WTC11 (cell line): ENCODE measurements at regions of chr14 and their contacts with region 1.

Region 1: DNA sequence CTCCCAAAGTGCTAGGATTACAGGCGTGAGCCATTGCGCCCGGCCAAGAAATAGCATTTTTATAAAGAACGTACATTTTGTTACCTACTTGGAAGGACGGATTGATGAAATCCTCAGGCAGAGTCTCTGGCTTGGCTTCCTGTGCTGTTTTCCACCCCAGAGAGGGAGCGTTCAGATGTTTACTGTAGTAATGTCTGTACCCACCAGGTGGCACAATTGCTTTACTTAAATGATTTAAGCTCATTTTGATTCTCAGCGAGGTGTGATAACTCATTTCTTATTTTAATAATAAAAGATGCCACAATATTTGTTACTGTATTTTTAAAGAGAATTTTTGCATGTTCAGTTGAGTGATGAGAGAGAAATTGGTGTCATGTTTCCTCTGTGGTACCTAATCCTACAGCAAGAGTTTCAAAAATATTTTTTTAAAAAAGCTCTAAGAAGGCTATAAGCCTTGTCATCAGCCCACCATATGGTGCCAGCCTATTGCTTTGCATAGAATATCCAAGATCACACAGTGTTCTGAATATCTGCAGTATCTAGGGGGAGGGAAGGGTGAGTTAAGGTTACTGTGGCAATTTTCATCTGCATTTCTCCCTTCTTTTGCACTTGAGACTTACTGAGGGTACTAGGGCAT is 82.6 kb upstream of the TRAF3 start:
- DNase-seq: peak; percentile 62
- ATAC-seq: peak; percentile 72
- H3K4me3 Mint-ChIP-seq: no peak overlapping the region
- H3K27ac Mint-ChIP-seq: peak overlapping the region; percentile 35; the same call in 1 of the 2 replicates
- H3K4me1 Mint-ChIP-seq: peaks cover 41% of the 10 kb centered on the region
- H3K27me3 Mint-ChIP-seq: no peaks in the 10 kb centered on the region
- CTCF ChIP-seq: peak; percentile 60

Region 2: GRCh38 chr14:102437997-102438915 is 256.4 kb before region 1 on chr14:
- CTCF ChIA-PET with region 1: interaction called, 14 read pairs
- POLR2A ChIA-PET with region 1: no interaction called
- DNase-seq: peak; percentile 96
- ATAC-seq: peak; percentile 98
- H3K4me3 Mint-ChIP-seq: peak overlapping the region; percentile 57
- H3K27ac Mint-ChIP-seq: peak overlapping the region; percentile 87
- H3K4me1 Mint-ChIP-seq: peaks cover 6% of the 10 kb centered on the region
- H3K27me3 Mint-ChIP-seq: no peaks in the 10 kb centered on the region
- CTCF ChIP-seq: peak; percentile 64

Region 3: DNA sequence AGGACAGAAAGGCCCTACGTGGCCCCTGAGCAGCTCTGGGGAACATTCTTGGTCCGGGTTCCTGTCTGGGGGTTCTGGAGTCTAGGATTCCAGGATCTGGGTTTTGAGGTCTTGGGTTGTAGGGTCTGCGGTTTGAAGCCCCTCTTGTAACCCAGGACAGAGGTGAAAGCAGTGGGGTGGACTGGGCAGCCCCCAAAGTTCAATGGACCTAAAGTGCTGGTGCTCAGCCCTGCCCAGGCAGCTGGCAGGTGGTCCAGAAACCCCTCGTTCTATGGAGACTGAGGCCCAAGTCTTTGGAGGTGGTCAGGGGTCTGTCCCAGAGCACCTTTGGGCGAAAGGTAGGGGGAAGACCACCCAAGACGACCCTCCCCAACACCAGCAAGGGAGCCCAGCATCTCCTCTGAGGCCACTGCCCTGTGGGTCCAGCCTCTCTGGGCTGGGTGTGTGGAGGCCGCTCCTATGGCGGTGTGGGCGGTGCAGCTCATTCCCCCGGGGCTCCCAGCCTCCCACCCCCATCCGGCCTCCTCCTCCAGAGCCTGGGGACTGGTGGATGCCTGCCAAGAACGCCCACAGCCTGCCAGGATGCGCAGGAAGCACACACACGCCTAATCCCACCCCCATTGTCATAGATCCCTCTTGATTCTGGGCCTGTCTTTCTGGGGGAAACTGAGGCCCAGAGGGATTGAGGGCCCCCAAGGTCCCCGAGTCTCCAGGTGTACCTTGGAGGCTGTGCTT is 154.9 kb before region 1 on chr14:
- CTCF ChIA-PET with region 1: interaction called, 10 read pairs
- POLR2A ChIA-PET with region 1: no interaction called
- DNase-seq: no peak
- ATAC-seq: no peak
- H3K4me3 Mint-ChIP-seq: no peak overlapping the region
- H3K27ac Mint-ChIP-seq: no peak overlapping the region
- H3K4me1 Mint-ChIP-seq: peaks cover 5% of the 10 kb centered on the region
- H3K27me3 Mint-ChIP-seq: peaks cover 8% of the 10 kb centered on the region
- CTCF ChIP-seq: no peak

Region 4: GRCh38 chr14:102731871-102732800 is 37.5 kb after region 1 on chr14:
- CTCF ChIA-PET with region 1: interaction called, 13 read pairs
- POLR2A ChIA-PET with region 1: no interaction called
- DNase-seq: no peak
- ATAC-seq: no peak
- H3K4me3 Mint-ChIP-seq: no peak overlapping the region
- H3K27ac Mint-ChIP-seq: no peak overlapping the region
- H3K4me1 Mint-ChIP-seq: 0 out of 2 replicates have a peak, but pooled peaks cover 2% of the 10 kb centered on the region
- H3K27me3 Mint-ChIP-seq: no peaks in the 10 kb centered on the region
- CTCF ChIP-seq: no peak

Region 5: DNA sequence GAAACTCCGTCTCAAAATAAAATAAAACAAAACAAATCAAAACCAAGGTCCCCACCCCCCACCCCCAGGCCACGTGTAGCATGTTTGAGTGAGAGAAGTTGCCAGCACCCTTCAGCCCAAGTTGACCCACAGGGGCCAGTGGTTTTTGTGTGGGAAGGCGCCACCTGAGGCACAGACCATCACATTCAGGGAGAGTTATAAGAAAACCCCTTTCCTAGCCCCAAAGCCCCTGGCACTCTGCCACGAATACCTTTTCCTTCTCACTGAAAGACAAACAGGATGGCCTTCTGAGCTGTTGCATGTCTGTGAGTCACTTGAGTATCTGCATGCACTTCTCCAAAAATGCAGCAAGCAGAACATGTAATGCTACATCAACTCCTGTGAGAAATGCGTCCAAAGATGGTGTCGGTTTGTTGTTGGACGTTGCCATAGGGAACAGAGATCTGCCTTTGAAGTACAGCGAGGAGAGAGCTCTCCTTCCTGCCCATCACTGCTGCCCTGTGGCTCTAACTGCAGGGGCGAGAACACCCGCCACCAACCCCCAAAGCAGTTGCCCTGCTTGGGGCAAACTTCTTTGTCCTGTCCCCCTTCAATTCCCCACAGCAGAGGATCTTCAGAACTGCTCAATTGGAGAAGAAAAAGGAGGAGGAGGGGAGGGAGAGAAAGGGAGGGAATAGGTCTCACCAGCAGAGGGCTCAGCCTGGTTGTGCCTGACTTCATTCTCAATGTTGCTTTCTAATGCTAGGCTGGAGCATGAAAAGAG is 79.9 kb after region 1 on chr14:
- CTCF ChIA-PET with region 1: interaction called, 72 read pairs
- POLR2A ChIA-PET with region 1: interaction called, 3 read pairs
- DNase-seq: peak; percentile 48
- ATAC-seq: peak; percentile 55
- H3K4me3 Mint-ChIP-seq: no peak overlapping the region
- H3K27ac Mint-ChIP-seq: no peak overlapping the region; the same call in 1 of the 2 replicates
- H3K4me1 Mint-ChIP-seq: peaks cover 29% of the 10 kb centered on the region
- H3K27me3 Mint-ChIP-seq: peaks cover 14% of the 10 kb centered on the region
- CTCF ChIP-seq: no peak

Region 6: GRCh38 chr14:102924632-102925588 is 230.3 kb after region 1 on chr14:
- CTCF ChIA-PET with region 1: interaction called, 17 read pairs
- POLR2A ChIA-PET with region 1: no interaction called
- DNase-seq: no peak
- ATAC-seq: no peak
- H3K4me3 Mint-ChIP-seq: no peak overlapping the region
- H3K27ac Mint-ChIP-seq: no peak overlapping the region
- H3K4me1 Mint-ChIP-seq: peaks cover 11% of the 10 kb centered on the region
- H3K27me3 Mint-ChIP-seq: peaks cover 39% of the 10 kb centered on the region
- CTCF ChIP-seq: no peak